AG04449 (cell line): ENCODE measurements at regions of chr1 and their contacts with region 1.

Region 1: DNA sequence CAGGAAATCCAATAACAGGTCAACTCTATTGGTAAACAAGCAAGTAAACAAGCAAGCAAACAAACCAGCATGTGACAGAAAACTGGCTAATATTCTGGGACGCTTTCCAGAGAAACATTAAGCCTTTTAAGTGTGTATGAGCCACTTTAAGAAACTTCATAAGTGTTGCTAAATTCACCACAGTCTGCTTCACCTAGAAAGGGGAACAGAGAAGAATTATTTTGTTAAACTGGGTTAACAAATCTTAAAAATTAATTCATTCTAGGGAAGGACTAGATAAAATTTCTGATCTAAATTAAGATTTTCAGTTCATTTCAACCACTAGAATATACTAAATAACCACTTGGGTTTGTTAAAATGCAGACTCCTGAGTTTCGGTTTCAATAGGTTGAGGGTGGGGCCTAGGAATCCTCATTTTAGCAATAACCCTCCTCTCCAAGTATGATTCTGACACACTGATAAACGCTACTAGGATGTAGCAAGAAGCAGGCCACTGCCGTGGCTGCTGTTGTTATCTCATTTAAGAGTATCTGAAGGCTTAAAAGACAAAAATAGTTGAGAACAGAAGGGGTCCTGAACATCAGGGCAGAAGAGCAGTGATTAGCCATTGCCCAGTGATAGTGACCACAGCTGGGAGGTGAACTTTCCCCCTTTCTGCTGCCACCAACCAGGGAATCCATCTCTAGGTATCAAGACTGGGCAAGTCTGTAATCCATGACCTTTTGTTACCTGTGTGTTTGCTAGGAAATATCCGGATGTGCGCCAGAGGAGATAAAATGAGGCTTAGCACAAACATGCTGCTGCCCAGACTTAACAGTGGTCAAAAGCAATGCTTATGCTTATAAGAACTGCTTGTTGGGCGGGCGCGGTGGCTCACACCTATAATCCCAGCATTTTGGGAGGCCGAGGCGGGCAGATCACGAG is 11.2 kb downstream of the CREG1 start:
- DNase-seq: no peak
- H3K4me3 ChIP-seq: no peak overlapping the region
- CTCF ChIP-seq: no peak

Region 2: DNA sequence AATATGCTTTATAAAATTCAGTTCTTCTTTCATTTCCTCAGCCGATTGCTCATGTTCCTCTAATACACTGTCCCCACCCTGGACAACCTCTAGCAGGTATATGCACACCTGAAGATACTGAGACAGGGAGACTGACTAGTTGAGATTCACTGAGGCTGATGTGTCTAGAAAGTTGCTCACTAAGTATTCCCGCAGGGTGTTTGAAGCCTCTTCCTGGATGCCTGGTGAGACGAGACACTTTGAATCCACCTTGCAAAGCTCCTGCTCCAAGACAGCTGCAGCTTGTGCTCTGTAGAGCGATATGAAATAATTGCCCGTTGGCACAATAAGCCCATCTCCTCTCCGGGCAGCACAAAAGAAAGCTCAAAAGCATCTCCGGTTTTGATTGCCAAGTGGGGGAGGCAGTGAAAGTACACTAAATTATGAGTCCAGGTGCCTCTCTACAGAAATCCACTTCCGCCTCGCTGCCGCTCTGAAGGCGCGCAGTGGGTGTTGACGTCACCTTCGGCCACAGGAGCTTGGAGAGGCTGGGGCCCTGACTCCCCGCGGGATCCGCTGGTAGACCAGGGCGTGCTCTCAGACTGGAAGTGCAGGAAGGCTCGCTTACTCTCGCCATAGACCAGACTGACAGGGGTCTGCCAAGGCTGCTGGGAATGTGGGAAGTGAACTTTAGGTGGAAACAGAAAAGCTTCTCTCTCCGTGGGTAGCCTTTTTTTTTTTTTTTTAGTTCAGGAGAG is 498.5 kb before region 1 on chr1:
- CTCF ChIA-PET with region 1: no interaction called
- POLR2A ChIA-PET with region 1: no interaction called
- DNase-seq: no peak
- H3K4me3 ChIP-seq: no peak overlapping the region
- CTCF ChIP-seq: no peak

Region 3: DNA sequence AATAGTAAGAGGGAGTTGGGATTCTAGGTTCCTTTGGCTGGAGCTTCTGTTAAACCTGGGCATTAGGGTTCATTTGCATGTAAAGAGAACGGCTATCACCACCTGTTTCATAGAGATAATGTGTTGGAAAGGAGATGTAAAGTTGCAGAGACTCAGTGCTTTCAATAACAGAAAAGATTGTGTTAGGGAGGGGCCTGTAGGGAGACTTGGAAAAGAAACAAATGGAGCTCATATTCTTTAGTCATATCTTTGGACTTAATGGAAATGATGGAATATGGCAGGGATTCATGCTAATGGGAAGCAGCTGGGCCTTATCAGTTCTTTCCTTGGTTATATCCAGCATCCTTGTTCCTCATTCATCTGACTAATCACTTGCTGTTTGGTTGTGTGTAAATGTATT is 169.0 kb before region 1 on chr1:
- CTCF ChIA-PET with region 1: no interaction called
- POLR2A ChIA-PET with region 1: no interaction called
- DNase-seq: no peak
- H3K4me3 ChIP-seq: no peak overlapping the region
- CTCF ChIP-seq: no peak

Region 4: DNA sequence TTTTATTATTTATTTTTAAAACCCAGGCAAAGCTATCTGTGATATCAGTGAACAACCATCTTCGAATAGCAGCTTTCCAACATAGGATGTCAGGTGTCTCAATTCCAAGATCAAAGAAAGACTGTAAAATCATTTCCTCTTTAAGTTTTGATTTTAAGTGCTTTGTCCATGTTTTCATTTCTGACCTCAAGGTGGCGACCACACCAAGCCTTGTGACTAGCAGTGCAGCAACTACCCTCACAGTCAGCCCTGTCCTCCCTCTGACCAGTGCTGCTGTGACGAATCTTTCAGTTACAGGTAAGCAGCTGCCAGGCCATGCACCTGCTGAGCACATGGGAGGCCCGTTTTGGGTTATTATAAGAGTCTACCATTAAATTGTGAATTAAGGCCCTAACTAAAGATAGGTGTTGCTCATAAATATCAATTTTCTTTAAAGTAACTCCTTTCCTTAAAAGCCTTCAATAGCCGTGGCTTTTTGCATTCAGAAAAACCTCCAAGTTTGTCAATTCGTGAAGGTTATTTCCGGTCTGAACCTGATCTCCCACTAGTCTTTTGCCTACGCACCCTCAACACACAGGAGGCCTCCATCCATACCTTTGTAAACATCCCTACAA is 141.0 kb before region 1 on chr1:
- CTCF ChIA-PET with region 1: interaction called, 14 read pairs
- POLR2A ChIA-PET with region 1: no interaction called
- DNase-seq: no peak
- H3K4me3 ChIP-seq: no peak overlapping the region
- CTCF ChIP-seq: peak; percentile 60

Region 5: DNA sequence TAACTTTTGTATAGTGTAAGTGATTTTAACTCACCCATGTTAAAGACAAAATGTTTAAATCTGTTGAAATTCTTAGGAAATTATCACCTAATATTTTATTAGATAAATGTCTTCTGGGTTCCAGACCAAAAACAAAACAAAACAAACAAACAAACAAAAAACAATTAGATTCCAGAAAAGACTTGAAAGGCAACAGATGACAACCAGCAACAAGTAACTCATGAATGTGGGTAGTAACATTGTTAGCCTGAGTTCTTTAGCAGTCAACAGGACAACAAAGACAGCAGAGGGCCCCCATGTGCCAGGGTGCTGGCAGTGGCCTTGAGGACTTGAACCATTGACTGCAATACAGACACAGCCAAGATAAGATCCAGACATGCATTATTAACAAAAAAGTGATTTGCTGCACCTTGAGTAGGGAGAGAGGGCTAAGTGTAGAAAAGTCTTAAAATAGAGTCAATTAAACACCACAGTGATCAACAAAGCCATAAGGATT is 21.6 kb before region 1 on chr1:
- CTCF ChIA-PET with region 1: interaction called, 25 read pairs
- POLR2A ChIA-PET with region 1: no interaction called
- DNase-seq: no peak
- H3K4me3 ChIP-seq: no peak overlapping the region
- CTCF ChIP-seq: no peak

Region 6: DNA sequence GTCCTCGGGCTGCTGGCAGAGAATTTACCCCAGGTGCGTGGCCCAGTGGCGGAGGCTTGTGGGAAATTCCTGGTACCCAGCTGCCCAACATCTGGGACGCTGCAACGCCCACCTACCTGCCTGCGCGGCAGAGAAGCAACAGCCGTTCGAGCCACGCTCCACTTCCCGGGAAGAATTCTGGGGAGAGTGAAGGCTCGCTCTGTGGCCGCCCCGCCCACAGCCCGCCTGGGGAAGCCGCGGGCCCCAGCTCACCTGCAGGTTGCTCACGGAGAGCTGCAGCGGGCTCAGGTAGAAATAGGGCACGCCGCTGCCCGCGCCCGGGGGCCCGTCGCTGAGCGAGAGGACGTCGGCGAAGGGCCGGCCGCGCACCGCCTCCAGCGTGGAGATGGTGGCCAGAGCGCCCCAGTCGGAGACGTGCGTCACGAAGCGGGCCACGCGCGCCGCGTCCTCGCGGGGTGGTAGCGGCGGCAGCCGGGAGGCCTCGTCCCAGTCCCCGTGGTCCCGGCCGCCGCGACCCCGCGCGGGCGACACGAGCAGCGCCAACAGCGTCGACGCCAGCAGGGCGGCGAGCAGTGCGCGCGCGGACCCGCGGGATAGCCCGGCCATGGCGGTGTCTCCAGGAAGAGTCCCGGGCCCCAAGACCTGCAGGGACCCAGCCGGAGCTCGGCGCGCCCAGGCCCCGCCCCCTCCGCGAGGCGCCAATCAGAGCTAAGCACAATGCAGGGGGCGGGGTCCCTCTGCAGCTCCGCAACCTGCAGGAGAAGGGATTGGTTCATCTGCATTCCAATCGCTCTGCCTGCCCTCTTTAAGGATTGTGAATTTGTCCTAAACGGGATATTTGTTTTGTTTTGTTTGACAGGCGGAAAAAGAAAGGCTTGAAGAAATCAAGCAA is 11.0 kb after region 1 on chr1 and contains the start of gene CREG1:
- CTCF ChIA-PET with region 1: interaction called, 100 read pairs
- POLR2A ChIA-PET with region 1: no interaction called
- DNase-seq: no peak
- H3K4me3 ChIP-seq: peak within 1 kb of the TSS; percentile 59
- CTCF ChIP-seq: no peak

Region 7: GRCh38 chr1:167563579-167564246 is 21.3 kb after region 1 on chr1:
- CTCF ChIA-PET with region 1: interaction called, 100 read pairs
- POLR2A ChIA-PET with region 1: no interaction called
- DNase-seq: no peak
- H3K4me3 ChIP-seq: no peak overlapping the region
- CTCF ChIP-seq: no peak